Esophagus muscularis mucosa (tissue), 4 donors: ENCODE measurements at regions of chr15 and their contacts with region 1.

Region 1: DNA sequence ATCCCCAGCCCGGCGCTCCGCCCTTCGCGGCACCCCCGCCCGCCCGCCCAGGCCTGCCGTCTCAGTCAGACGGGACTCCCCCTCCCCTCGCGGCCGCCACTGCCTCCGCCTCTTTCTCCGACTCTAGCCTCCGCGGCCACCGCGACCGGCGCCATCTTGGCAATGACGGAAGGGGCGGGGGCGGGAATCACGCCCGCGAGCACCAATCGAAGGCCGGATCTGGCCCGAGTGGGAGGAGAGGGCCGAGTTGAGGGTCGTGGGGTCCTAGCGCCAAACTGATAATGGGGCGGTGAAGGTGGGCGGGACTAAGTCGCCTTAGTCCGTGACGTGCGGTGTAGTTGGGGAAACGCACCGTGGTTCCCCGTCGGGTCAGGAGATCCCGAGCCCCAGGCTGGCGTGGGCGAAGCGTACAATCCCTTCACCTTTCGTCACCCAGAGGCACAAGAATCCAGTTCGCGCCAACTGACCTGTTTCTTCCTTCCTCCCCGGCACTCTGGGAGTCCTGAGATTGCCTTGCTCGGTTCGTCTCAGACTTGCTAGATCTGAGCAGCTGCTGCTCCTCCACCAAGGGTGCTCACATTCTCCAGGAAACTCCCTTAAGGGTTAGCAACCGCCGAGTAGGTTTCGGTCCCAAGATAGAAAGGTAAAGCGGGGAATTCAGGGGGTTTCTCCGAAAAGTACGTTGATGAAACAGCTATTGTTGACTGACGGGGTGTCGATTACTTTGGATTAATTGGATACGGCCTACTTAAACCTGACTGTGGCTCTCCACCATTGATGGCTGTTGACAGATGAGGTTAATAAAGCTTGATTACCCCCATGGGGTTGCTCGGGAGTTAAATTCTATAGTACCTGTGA is at the start of gene DENND4A:
- DNase-seq: peak; percentile 99
- H3K4me3 ChIP-seq: peak within 1 kb of the TSS; percentile 84 to 99 (median 96)
- H3K27ac ChIP-seq: peak within 1 kb of the TSS; percentile 98 to 100 (median 100)
- H3K4me1 ChIP-seq: peaks cover 21 to 39% (median 35%) of the 10 kb centered on the region in 4 donors
- H3K27me3 ChIP-seq: no peaks in the 10 kb centered on the region
- CTCF ChIP-seq: peak in 1 of 3 experiments; percentile 11
- EP300 ChIP-seq: no peak
- POLR2A ChIP-seq: peak; percentile 36
- total RNA-seq, gene DENND4A: 17.7 to 34.3 (median 25.4) TPM

Region 2: DNA sequence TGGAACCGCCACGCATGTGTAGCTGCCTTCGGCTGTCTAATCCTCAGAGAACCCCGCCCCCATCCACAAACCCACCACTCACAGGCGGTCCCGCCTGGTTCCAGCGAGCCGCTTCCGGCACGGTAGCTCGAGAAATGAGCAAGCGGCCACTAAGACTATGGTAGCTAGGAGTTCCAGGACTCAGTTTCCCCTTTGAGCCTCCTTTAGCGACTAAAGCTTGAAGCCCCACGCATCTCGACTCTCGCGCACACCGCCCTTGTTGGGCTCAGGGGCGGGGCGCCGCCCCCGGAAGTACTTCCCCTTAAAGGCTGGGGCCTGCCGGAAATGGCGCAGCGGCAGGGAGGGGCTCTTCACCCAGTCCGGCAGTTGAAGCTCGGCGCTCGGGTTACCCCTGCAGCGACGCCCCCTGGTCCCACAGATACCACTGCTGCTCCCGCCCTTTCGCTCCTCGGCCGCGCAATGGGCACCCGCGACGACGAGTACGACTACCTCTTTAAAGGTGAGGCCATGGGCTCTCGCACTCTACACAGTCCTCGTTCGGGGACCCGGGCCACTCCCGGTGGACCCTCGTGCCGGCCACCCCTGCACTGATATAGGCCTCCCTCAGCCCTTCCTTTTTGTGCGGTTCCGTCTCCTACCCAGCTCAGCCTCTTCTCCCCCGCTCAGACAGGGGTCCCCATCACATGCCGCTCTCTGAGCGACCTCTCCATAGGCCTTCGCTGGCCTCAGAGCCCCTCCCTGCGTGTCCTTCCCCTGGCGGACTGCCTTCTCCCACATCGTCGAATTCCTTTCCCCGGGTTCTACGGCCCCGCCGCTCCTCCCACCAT is 77.0 kb after region 1 on chr15 and contains the start of gene RAB11A:
- intact Hi-C with region 1: loop called (anchors 2 kb)
- DNase-seq: peak; percentile 99
- H3K4me3 ChIP-seq: peak within 1 kb of the TSS; percentile 77 to 96 (median 86)
- H3K27ac ChIP-seq: peak within 1 kb of the TSS; percentile 92 to 96 (median 94)
- H3K4me1 ChIP-seq: peaks cover 11 to 37% (median 34%) of the 10 kb centered on the region in 4 donors
- H3K27me3 ChIP-seq: no peaks in the 10 kb centered on the region
- CTCF ChIP-seq: peak; percentile 31 to 46 (median 35)
- EP300 ChIP-seq: no peak
- POLR2A ChIP-seq: peak; percentile 92
- total RNA-seq, gene RAB11A: 51.9 to 134 (median 122) TPM